ENCODE measurements at regions of chr20 and their contacts with region 1.

Region 1: DNA sequence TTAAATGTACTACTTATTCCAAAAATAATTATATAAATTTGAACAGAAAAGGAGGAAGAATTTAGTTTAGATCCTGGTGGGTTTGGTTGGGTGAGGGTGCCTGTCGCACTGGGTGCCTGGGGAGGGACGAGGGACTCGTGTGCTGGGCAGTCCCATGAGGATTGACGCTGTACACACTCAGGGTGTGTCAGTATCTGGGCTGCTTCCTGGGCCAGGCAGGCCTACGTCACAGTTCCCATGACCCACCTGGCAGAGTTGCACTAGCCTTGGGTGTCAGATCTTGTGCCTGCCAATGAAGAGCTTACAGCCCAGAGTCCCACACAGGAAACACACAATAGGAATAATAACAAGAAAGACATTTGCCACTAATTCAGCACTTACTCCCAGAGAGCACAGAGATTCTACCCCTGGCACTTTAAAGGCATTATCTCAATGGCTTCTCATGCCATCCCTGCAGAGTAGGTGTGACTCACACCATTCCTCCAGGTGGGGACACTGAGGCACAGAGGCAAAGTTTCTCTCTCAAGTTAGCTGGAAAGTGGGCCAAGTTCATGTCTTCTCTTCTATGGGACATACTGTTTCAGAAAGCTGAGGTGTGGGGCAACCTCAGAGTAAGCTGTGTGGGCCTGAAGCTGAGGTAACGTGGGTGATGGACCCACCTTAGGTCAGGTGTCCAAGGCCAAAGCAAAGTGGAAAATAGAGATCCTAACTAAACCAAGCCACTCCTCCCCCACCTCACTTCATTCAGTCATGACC is 1.3 kb upstream of the SDCBP2 start:
- DNase-seq: no peak
- ATAC-seq: peak; percentile 1
- H3K4me3 ChIP-seq: no peak overlapping the region
- H3K27ac ChIP-seq: peak overlapping the region; percentile 100
- H3K4me1 ChIP-seq: peaks cover 54% of the 10 kb centered on the region
- H3K27me3 ChIP-seq: no peaks in the 10 kb centered on the region
- CTCF ChIP-seq: no peak

Region 2: GRCh38 chr20:1392823-1393506 is 62.7 kb after region 1 on chr20 and contains the start of gene FKBP1A:
- intact Hi-C with region 1: loop called (anchors 10 kb)
- DNase-seq: peak; percentile 96
- ATAC-seq: peak; percentile 97
- H3K4me3 ChIP-seq: peak within 1 kb of the TSS; percentile 85
- H3K27ac ChIP-seq: peak within 1 kb of the TSS; percentile 88
- H3K4me1 ChIP-seq: peaks cover 46% of the 10 kb centered on the region
- H3K27me3 ChIP-seq: no peaks in the 10 kb centered on the region
- CTCF ChIP-seq: peak; percentile 41
- total RNA-seq, gene FKBP1A: 266 TPM

Measured in upper lobe of right lung (tissue), 1 donor.